ENCODE measurements at regions of chr2 and their contacts with region 1.

Region 1: DNA sequence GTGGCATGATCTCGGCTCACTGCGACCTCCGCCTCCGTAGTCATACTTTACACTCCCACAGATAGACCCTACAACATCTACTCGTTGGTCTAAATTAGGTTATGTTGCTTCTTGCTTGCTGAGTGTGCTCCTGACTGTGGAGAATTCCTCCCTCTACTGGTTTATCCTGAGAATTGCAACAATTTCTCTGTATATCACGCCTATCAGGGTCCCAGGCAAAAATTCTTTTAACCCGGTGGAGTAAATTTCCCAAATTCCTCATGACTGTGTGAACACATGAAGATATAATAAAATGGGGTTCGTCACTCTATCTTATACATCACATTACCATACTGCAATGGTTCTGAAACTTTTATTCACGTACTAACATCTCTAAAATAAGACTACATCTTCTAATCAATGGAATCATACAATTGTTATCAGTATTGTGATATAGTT is 156.7 kb downstream of the EVA1A start:
- DNase-seq: peak; percentile 70
- H3K4me3 ChIP-seq: no peak overlapping the region
- H3K27ac ChIP-seq: no peak overlapping the region
- H3K4me1 ChIP-seq: no peaks in the 10 kb centered on the region
- H3K27me3 ChIP-seq: peaks cover 7% of the 10 kb centered on the region
- CTCF ChIP-seq: peak; percentile 83

Region 2: GRCh38 chr2:74690571-74690970 is 713.4 kb before region 1 on chr2:
- CTCF ChIA-PET with region 1: no interaction called
- POLR2A ChIA-PET with region 1: no interaction called
- intact Hi-C with region 1: loop called (anchors 10 kb)
- DNase-seq: peak; percentile 78
- H3K4me3 ChIP-seq: no peak overlapping the region
- H3K27ac ChIP-seq: no peak overlapping the region
- H3K4me1 ChIP-seq: no peaks in the 10 kb centered on the region
- H3K27me3 ChIP-seq: no peaks in the 10 kb centered on the region
- CTCF ChIP-seq: peak; percentile 82

Region 3: GRCh38 chr2:74919827-74920226 is 484.2 kb before region 1 on chr2:
- CTCF ChIA-PET with region 1: interaction called, 4 read pairs
- POLR2A ChIA-PET with region 1: no interaction called
- intact Hi-C with region 1: loop called (anchors 2 kb)
- DNase-seq: peak; percentile 70
- H3K4me3 ChIP-seq: peak overlapping the region; percentile 38
- H3K27ac ChIP-seq: no peak overlapping the region
- H3K4me1 ChIP-seq: no peaks in the 10 kb centered on the region
- H3K27me3 ChIP-seq: no peaks in the 10 kb centered on the region
- CTCF ChIP-seq: peak; percentile 80

Region 4: DNA sequence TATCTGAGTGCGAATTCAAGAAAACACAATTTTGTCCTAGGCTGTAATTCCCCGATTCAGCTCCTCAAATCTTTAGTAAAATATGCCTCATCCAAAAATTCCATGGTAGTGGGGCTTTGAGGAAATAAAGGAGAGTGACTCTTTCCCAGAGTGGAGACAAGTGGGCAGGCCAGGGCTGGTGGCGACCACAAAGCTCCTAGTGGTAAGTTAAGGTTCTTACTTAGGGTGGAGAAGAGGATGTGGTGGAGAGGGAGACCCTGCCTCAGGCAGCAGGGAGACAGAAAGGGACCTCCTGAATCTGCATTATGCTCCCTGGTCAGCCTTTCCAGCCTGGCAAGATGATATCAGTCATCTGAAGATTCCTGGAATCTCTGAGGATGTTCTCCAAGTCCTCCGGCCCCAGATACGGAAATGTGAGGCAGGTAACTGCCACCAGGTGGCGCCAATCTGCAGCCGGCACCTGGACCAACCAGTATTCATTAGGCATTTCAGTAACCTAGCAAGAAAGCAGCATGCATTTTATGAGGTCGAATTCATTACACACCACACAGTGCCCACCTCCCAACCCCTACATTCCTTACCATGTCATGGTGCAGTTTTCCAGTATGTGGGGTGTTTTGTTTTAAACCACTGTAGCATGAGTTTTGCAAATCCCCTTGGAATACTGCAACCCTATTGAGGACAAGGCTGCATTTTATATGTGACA is 339.2 kb before region 1 on chr2:
- CTCF ChIA-PET with region 1: no interaction called
- POLR2A ChIA-PET with region 1: no interaction called
- intact Hi-C with region 1: loop called (anchors 1 kb)
- DNase-seq: peak; percentile 72
- H3K4me3 ChIP-seq: no peak overlapping the region
- H3K27ac ChIP-seq: no peak overlapping the region
- H3K4me1 ChIP-seq: no peaks in the 10 kb centered on the region
- H3K27me3 ChIP-seq: no peaks in the 10 kb centered on the region
- CTCF ChIP-seq: peak; percentile 97

Region 5: GRCh38 chr2:75098856-75099255 is 305.2 kb before region 1 on chr2:
- CTCF ChIA-PET with region 1: no interaction called
- POLR2A ChIA-PET with region 1: no interaction called
- intact Hi-C with region 1: loop called (anchors 10 kb)
- DNase-seq: peak; percentile 55
- H3K4me3 ChIP-seq: no peak overlapping the region
- H3K27ac ChIP-seq: no peak overlapping the region
- H3K4me1 ChIP-seq: no peaks in the 10 kb centered on the region
- H3K27me3 ChIP-seq: no peaks in the 10 kb centered on the region
- CTCF ChIP-seq: peak; percentile 60

Region 6: GRCh38 chr2:75157430-75157829 is 246.6 kb before region 1 on chr2:
- CTCF ChIA-PET with region 1: no interaction called
- POLR2A ChIA-PET with region 1: no interaction called
- intact Hi-C with region 1: loop called (anchors 1 kb)
- DNase-seq: no peak
- H3K4me3 ChIP-seq: no peak overlapping the region
- H3K27ac ChIP-seq: no peak overlapping the region
- H3K4me1 ChIP-seq: no peaks in the 10 kb centered on the region
- H3K27me3 ChIP-seq: no peaks in the 10 kb centered on the region
- CTCF ChIP-seq: peak; percentile 35; the same call in 1 of the 2 replicates

Region 7: GRCh38 chr2:75199428-75200011 is 204.5 kb before region 1 on chr2 and contains the start of gene TACR1:
- CTCF ChIA-PET with region 1: interaction called, 9 read pairs
- POLR2A ChIA-PET with region 1: no interaction called
- intact Hi-C with region 1: loop called (anchors 2 kb)
- DNase-seq: peak; percentile 87
- H3K4me3 ChIP-seq: peak within 1 kb of the TSS; percentile 39
- H3K27ac ChIP-seq: no peak within 1 kb of the TSS
- H3K4me1 ChIP-seq: peaks cover 15% of the 10 kb centered on the region
- H3K27me3 ChIP-seq: peaks cover 77% of the 10 kb centered on the region
- CTCF ChIP-seq: peak; percentile 85
- total RNA-seq, gene TACR1: not detected in 2 replicates

Region 8: DNA sequence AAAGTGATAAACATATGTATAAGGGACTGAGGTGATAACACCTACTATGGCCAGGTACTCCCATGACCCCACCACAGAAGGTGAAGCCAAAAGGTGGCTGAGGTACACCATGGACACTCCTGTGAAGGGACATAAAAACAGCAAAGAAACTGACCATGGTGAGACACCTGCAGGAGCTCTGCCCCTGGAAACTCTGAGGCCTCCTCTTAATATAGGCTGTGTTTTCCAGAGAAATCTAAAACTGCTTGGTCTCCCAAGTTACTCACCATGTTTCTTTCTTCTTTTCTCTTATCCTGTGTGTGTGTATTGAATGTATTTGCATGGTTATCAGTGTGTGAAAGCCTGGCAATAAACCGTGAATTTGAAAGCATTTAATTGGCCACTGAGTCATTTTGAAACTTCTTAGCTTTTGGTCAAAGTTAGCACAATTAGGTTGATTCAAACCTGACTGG is 1046.0 kb after region 1 on chr2:
- CTCF ChIA-PET with region 1: no interaction called
- POLR2A ChIA-PET with region 1: no interaction called
- intact Hi-C with region 1: no loop called
- DNase-seq: no peak
- H3K4me3 ChIP-seq: no peak overlapping the region
- H3K27ac ChIP-seq: no peak overlapping the region
- H3K4me1 ChIP-seq: no peaks in the 10 kb centered on the region
- H3K27me3 ChIP-seq: no peaks in the 10 kb centered on the region
- CTCF ChIP-seq: no peak